AG04449 (cell line): ENCODE measurements at regions of chr20 and their contacts with region 1.

Region 1: GRCh38 chr20:18496740-18497592 is at the start of gene RBBP9:
- DNase-seq: peak; percentile 1
- H3K4me3 ChIP-seq: peak within 1 kb of the TSS; percentile 91
- CTCF ChIP-seq: no peak

Region 2: DNA sequence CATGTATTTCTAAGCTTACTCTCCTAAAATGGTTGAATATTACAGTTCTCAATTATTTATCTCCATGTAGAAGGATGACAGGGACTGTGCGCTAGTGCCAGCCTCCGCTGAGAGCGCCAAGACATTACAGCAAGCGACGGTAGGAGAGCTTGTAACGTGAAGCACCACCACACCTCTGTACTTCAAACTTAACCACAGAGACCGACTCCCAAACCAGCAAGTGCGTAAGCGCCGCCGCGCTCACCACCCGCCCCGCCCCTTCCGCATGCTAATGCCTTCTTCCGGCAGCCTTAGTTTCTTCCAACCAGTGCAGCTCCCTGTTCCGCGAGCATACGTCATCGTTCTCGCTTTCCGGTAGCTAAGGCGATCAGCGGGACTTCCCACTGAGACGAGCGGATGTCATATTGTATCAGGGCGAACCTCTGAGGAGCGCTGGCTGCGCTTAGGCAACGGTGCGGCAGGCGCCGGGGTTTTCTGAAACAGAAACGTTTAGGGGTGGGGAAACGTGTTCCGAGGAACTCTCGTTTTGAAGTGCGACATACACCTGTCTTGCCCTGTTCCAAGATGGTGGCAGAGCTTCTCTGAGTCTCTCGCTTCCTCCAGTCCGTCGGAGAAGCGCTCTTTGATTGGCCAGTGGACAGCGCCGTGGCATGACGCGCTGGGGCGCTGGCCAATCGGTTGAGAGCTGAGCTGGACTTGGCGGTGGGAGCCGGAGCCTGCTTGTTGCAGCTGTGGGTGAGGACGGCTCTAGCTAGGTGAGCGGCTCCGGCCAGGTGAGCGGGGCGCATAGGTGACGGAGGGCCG is 10.5 kb after region 1 on chr20 and contains the start of gene SEC23B:
- CTCF ChIA-PET with region 1: interaction called, 12 read pairs
- POLR2A ChIA-PET with region 1: interaction called, 16 read pairs
- DNase-seq: peak; percentile 89
- H3K4me3 ChIP-seq: peak within 1 kb of the TSS; percentile 87
- CTCF ChIP-seq: no peak